Activated CD8-positive, alpha-beta T cell treated with anti-CD3 and anti-CD28 coated beads for 36 hours (primary cell): ENCODE measurements at regions of chr6 and their contacts with region 1.

Region 1: GRCh38 chr6:31834434-31835198 is 7.1 kb downstream of the HSPA1B start:
- DNase-seq: peak; percentile 84
- ATAC-seq: peak; percentile 70
- H3K4me3 Mint-ChIP-seq: peak overlapping the region; percentile 92
- H3K27ac Mint-ChIP-seq: peak overlapping the region; percentile 95
- H3K4me1 Mint-ChIP-seq: peaks cover 30% of the 10 kb centered on the region
- H3K27me3 Mint-ChIP-seq: no peaks in the 10 kb centered on the region
- CTCF ChIP-seq: no peak

Region 2: DNA sequence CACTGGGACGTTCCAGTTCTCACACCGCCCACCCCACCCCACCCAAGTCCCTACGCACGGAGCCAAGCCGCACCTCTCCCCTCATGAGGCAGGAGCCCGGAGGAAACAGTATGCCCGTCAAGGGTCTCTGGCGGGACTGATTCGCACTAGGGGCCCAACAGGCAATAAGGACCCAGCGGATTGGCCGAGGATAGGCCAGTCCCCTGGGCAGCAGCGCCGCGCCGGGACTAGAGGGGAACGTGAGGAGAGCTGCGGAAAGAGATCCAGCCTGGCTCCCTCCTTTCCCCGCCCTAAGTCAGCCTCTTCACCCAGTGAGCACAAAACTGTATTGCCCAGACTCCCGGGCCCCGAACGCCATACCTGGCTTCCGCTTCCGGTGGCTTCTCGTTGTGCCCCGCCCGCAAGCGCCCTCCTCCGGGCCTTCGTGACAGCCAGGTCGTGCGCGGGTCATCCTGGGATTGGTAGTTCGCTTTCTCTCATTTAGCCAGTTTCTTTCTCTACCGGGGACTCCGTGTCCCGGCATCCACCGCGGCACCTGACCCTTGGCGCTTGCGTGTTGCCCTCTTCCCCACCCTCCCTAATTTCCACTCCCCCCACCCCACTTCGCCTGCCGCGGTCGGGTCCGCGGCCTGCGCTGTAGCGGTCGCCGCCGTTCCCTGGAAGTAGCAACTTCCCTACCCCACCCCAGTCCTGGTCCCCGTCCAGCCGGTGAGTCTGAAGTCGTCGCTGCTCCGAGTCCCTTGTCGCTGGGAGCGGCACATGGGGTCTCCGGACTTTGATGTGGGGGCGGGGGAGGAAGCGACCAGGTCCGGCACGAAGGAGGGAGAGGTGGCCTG is 168.9 kb before region 1 on chr6 and contains the start of gene CSNK2B:
- CTCF ChIA-PET with region 1: interaction called, 4 read pairs
- POLR2A ChIA-PET with region 1: interaction called, 8 read pairs
- intact Hi-C with region 1: loop called (anchors 10 kb)
- DNase-seq: peak; percentile 99
- ATAC-seq: peak; percentile 88
- H3K4me3 Mint-ChIP-seq: peak within 1 kb of the TSS; percentile 98
- H3K27ac Mint-ChIP-seq: peak within 1 kb of the TSS; percentile 97
- H3K4me1 Mint-ChIP-seq: peaks cover 61% of the 10 kb centered on the region
- H3K27me3 Mint-ChIP-seq: no peaks in the 10 kb centered on the region
- CTCF ChIP-seq: no peak
- total RNA-seq, gene CSNK2B: 241 to 247 TPM

Region 3: GRCh38 chr6:31822036-31822821 is 12.4 kb before region 1 on chr6:
- CTCF ChIA-PET with region 1: interaction called, 7 read pairs
- POLR2A ChIA-PET with region 1: interaction called, 15 read pairs
- intact Hi-C with region 1: no loop called
- DNase-seq: peak; percentile 74
- ATAC-seq: peak; percentile 45
- H3K4me3 Mint-ChIP-seq: peak overlapping the region; percentile 80
- H3K27ac Mint-ChIP-seq: peak overlapping the region; percentile 96
- H3K4me1 Mint-ChIP-seq: peaks cover 62% of the 10 kb centered on the region
- H3K27me3 Mint-ChIP-seq: no peaks in the 10 kb centered on the region
- CTCF ChIP-seq: no peak

Region 4: DNA sequence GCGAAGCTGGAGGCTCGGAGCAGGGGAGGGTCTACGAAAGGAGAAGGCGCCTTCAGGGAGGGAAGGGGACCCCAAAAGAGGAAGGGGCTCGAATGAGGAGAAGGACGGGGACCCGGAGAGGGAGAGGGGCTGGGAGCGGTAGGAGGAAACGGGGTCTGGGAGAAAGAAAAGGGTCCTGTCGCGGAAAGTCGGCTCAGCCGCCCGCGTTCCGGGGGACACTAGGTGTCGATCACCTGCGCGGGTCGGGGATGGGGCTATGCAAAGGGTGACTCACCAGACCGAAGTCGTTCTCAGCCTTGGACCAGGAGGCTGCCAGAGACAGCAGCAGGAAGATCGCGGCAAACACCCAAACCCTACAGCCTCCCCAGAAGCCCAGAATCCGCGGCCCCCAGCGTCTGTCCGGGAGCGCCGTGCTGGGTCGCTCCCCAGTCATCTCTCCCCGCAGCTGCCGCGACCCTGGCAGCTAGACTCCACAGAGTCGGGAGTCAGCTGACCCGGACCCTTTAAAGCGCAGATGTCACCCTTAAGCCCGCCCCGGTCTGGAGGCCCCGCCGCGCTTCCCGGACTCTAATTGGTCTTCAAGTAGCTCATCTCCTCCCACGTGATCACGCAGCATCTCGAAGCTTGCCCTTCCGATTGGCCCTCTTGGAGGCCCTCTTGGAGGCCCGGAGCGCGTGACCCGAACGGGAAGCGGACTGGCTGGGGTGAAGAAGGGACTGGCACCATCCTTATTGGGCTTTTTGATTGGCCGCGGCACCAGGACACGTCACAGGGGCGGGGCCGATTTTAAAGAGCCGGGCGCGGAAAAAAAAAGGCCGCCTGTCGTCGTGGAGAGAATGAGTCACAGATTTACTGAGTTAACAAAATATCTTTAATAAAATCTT is 28.0 kb after region 1 on chr6 and contains the start of gene NEU1:
- CTCF ChIA-PET with region 1: interaction called, 6 read pairs
- POLR2A ChIA-PET with region 1: interaction called, 42 read pairs
- intact Hi-C with region 1: loop called (anchors 2 kb)
- DNase-seq: peak; percentile 100
- ATAC-seq: peak; percentile 96
- H3K4me3 Mint-ChIP-seq: peak within 1 kb of the TSS; percentile 84
- H3K27ac Mint-ChIP-seq: peak within 1 kb of the TSS; percentile 90
- H3K4me1 Mint-ChIP-seq: peaks cover 20% of the 10 kb centered on the region
- H3K27me3 Mint-ChIP-seq: no peaks in the 10 kb centered on the region
- CTCF ChIP-seq: no peak
- total RNA-seq, gene NEU1: 8.7 to 9.8 TPM